Panc1 (cell line): ENCODE measurements at regions of chr11 and their contacts with region 1.

Region 1: DNA sequence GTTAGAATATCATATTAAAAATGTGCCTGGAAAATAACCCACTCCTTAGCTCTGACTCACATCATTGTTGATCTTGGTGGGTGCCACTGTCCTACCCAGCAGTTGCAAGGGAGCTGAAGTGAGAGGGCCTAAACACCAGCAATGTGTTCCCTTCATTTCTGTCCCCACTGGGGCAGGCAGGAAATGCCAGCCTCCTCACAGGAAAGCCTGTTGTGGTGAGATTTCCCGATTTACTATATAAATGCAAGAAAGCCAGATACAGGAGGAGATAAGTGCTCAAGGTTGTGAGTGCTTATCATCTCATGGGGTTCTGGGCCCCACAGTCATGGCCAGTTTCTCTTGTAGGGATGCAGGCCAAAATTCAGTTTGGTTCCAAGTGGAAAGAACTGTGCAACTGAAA is 15.8 kb upstream of the FLI1 start:
- DNase-seq: no peak
- ATAC-seq: no peak
- H3K4me3 ChIP-seq: no peak overlapping the region
- H3K27ac ChIP-seq: no peak overlapping the region
- H3K4me1 ChIP-seq: no peaks in the 10 kb centered on the region
- H3K27me3 ChIP-seq: peaks cover 40% of the 10 kb centered on the region
- CTCF ChIP-seq: no peak

Region 2: DNA sequence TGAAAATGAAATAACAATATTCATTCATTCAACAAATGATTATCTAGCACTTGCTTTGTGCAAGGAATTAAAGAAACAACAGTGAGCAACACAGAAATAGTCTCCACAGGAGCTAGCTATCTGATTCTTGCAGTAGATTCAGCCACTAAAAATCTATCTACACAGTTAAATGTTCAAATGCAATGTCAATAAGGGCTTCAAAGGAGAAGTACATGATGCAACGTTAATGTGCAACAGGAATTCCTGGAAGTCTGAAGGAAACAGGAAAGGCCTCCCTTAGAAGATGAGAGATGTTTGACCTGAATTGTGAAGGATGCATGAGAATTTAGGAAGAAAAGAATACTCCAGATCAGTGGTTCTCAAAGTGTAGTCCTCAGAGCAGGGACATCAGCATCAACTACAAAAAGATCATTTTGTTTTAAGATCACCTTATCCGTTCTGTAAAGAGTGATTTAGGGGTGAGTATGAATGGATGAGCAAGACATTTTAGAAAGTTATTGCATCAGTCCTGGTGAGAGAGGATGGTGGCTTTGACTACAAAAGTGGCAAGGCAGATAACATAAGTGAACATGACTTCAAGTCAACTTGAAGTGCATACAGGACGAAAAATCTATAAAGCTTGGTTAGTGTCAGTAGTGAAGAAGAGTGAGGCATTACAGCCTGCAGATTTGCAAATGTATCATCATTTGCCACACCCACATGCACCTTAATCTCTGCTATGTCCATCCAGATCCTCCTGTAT is 186.7 kb before region 1 on chr11:
- CTCF ChIA-PET with region 1: no interaction called
- POLR2A ChIA-PET with region 1: interaction called, 12 read pairs
- in situ Hi-C with region 1: no loop called
- intact Hi-C with region 1: no loop called
- DNase-seq: no peak
- ATAC-seq: no peak
- H3K4me3 ChIP-seq: no peak overlapping the region
- H3K27ac ChIP-seq: peak overlapping the region; percentile 96
- H3K4me1 ChIP-seq: peaks cover 56% of the 10 kb centered on the region
- H3K27me3 ChIP-seq: no peaks in the 10 kb centered on the region
- CTCF ChIP-seq: no peak

Region 3: DNA sequence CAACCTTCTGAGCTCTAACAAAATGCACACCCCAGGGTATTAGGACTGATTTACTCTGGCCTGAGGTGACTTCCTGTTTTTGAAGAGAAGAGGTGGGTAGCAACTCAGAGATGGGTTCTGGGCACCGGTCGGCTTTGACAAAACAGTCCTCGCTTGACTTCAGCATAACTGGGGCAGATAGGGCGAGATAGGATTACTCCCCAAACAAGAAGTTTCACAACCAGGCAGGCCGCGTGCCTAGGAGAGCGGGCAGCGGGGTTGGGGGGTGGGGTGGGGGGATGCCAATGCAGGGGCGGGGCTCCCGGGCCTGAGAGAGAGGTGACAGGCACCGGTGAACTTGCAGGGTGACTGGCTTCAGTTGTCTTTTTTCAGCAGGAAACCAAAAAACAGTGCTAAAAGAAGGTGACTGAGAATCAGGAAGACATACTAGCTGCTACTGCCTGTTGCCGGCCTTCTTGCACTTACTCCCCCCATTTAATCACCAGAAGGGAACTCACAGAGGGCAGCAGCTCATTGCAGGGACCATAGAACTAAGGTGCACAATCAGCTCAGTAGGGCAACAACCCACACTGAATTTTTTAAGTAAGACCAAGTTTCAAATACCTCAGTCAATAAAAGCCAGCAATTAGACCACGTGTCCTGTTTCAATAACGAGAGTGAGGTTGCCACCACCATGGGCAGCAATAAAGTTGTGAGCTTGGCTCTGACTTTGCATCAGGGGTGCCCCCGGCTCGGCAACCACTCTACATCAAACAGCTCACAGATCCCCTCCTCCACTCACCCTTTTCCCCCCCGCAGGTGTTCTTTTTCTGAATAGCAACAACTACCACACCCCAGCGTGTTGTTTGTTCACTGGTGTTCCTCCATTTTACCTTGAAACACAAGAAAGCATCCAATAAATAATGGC is 53.5 kb before region 1 on chr11:
- CTCF ChIA-PET with region 1: no interaction called
- POLR2A ChIA-PET with region 1: interaction called, 13 read pairs
- in situ Hi-C with region 1: no loop called
- intact Hi-C with region 1: no loop called
- DNase-seq: no peak
- ATAC-seq: no peak
- H3K4me3 ChIP-seq: no peak overlapping the region
- H3K27ac ChIP-seq: no peak overlapping the region
- H3K4me1 ChIP-seq: no peaks in the 10 kb centered on the region
- H3K27me3 ChIP-seq: no peaks in the 10 kb centered on the region
- CTCF ChIP-seq: no peak

Region 4: DNA sequence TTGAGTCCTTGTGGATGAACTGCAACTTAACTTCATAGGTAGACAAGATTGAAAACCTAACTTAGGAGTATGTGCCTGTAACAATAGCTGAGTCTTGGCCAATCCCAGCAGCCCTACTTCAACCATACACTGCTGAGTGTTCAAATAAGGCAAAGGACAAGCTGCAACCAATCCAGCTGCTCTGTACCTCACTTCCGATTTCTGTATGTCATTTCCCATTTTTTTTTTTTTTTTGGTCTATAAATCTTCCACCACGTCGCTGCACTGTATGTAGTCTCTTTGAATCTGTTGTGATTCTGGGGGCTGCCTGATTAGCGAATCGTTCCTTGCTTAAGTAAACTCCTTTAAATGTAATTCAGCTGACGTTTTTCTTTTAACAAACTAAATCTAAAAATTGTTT is 19.5 kb before region 1 on chr11:
- CTCF ChIA-PET with region 1: no interaction called
- POLR2A ChIA-PET with region 1: no interaction called
- in situ Hi-C with region 1: no loop called
- intact Hi-C with region 1: no loop called
- DNase-seq: no peak
- ATAC-seq: no peak
- H3K4me3 ChIP-seq: no peak overlapping the region
- H3K27ac ChIP-seq: no peak overlapping the region
- H3K4me1 ChIP-seq: no peaks in the 10 kb centered on the region
- H3K27me3 ChIP-seq: no peaks in the 10 kb centered on the region; the same call in 1 of the 2 replicates
- CTCF ChIP-seq: no peak